GM12878 (cell line): ENCODE measurements at regions of chrX and their contacts with region 1.

Region 1: GRCh38 chrX:109714340-109714958 is 18.6 kb downstream of the ACSL4 start:
- DNase-seq: no peak
- ATAC-seq: peak; percentile 16; the same call in 2 of the 3 replicates
- H3K4me3 ChIP-seq: no peak overlapping the region
- H3K27ac ChIP-seq: no peak overlapping the region
- H3K4me1 ChIP-seq: peaks cover 3% of the 10 kb centered on the region
- H3K27me3 ChIP-seq: no peaks in the 10 kb centered on the region
- CTCF ChIP-seq: no peak
- EP300 ChIP-seq: no peak
- POLR2A ChIP-seq: no peak
- RAD21 ChIP-seq: no peak

Region 2: GRCh38 chrX:109184506-109185139 is 529.8 kb before region 1 on chrX:
- CTCF ChIA-PET with region 1: no interaction called
- POLR2A ChIA-PET with region 1: no interaction called
- RAD21 ChIA-PET with region 1: no interaction called
- SMC1A ChIA-PET with region 1: no interaction called
- in situ Hi-C with region 1: no loop called
- intact Hi-C with region 1: no loop called
- DNase-seq: no peak
- ATAC-seq: peak; percentile 47
- H3K4me3 ChIP-seq: no peak overlapping the region
- H3K27ac ChIP-seq: no peak overlapping the region; the same call in 1 of the 2 replicates
- H3K4me1 ChIP-seq: no peaks in the 10 kb centered on the region; the same call in 1 of the 2 replicates
- H3K27me3 ChIP-seq: no peaks in the 10 kb centered on the region
- CTCF ChIP-seq: no peak
- EP300 ChIP-seq: peak in 1 of 2 experiments; percentile 19; a peak in 1 of 4 replicates
- POLR2A ChIP-seq: no peak
- RAD21 ChIP-seq: no peak

Region 3: GRCh38 chrX:109485470-109486340 is 228.7 kb before region 1 on chrX:
- CTCF ChIA-PET with region 1: interaction called, 27 read pairs
- POLR2A ChIA-PET with region 1: no interaction called
- RAD21 ChIA-PET with region 1: interaction called, 8 read pairs
- SMC1A ChIA-PET with region 1: interaction called, 23 read pairs
- in situ Hi-C with region 1: no loop called
- intact Hi-C with region 1: loop called (anchors 5 kb)
- DNase-seq: peak; percentile 34
- ATAC-seq: peak; percentile 84
- H3K4me3 ChIP-seq: no peak overlapping the region
- H3K27ac ChIP-seq: no peak overlapping the region
- H3K4me1 ChIP-seq: no peaks in the 10 kb centered on the region
- H3K27me3 ChIP-seq: no peaks in the 10 kb centered on the region
- CTCF ChIP-seq: peak; percentile 93 to 99 (median 99); a peak in 5 of 6 replicates
- EP300 ChIP-seq: no peak
- POLR2A ChIP-seq: no peak
- RAD21 ChIP-seq: peak; percentile 91

Region 4: GRCh38 chrX:109774706-109775105 is 60.3 kb after region 1 on chrX:
- CTCF ChIA-PET with region 1: interaction called, 7 read pairs
- POLR2A ChIA-PET with region 1: interaction called, 7 read pairs
- RAD21 ChIA-PET with region 1: interaction called, 5 read pairs
- SMC1A ChIA-PET with region 1: interaction called, 24 read pairs
- in situ Hi-C with region 1: no loop called
- intact Hi-C with region 1: loop called (anchors 5 kb)
- DNase-seq: peak; percentile 50
- ATAC-seq: peak; percentile 97
- H3K4me3 ChIP-seq: no peak overlapping the region
- H3K27ac ChIP-seq: 0 out of 2 replicates have a peak overlapping the region, but pooled peaks have one; percentile 12
- H3K4me1 ChIP-seq: peaks cover 6% of the 10 kb centered on the region; the same call in 1 of the 2 replicates
- H3K27me3 ChIP-seq: no peaks in the 10 kb centered on the region
- CTCF ChIP-seq: no peak
- EP300 ChIP-seq: peak; percentile 64 to 85; a peak in 2 of 4 replicates
- POLR2A ChIP-seq: no peak
- RAD21 ChIP-seq: no peak

Region 5: GRCh38 chrX:109830704-109831206 is 116.3 kb after region 1 on chrX:
- CTCF ChIA-PET with region 1: interaction called, 3 read pairs
- POLR2A ChIA-PET with region 1: no interaction called
- RAD21 ChIA-PET with region 1: interaction called, 20 read pairs
- SMC1A ChIA-PET with region 1: interaction called, 12 read pairs
- in situ Hi-C with region 1: no loop called
- intact Hi-C with region 1: no loop called
- DNase-seq: no peak
- ATAC-seq: peak; percentile 80
- H3K4me3 ChIP-seq: no peak overlapping the region
- H3K27ac ChIP-seq: no peak overlapping the region
- H3K4me1 ChIP-seq: no peaks in the 10 kb centered on the region
- H3K27me3 ChIP-seq: no peaks in the 10 kb centered on the region
- CTCF ChIP-seq: no peak
- EP300 ChIP-seq: no peak
- POLR2A ChIP-seq: no peak
- RAD21 ChIP-seq: no peak

Region 6: DNA sequence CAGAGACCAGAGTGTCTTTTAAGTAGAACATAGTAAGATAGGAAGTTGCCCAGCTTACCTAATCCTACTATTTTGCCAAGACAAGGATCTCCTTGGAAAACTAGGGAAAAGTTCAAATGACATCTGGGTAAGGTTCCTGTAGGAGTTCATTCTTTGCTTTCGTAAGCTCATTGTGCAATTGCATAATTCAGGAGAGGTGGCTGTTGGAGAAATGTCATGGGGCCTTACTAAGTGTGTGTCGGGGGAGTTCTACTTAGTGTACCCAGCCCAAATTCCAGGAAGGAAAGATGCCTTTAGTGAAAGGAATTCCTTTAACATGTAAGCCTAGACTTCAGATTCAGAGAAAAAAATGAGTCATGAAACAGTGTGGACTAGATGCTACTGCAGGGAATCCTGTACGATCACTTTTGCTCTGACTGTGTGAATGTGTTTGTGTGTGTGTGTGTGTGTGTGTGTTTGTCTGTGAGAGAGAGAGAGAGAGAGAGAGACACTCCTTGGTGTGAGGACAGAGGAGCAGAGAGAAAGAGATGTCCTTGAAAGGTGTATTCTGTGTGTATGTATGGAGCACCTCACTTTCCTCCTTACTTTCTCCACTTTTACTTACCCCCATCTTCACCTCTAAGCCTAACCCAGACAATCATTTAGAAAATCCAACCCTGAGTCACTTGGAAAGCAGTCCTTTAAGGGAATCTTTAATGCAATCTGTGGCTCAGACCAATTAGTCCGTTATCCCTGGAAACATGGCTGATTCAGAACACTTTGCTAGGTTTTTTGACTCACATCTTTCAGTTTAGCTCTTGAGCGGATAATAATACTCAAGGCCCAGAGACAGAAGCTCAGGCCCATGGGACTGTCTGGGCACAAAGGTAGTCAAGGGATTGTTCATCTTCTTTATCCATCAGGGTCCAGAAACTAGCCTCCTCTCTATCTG is 133.1 kb after region 1 on chrX:
- CTCF ChIA-PET with region 1: interaction called, 337 read pairs
- POLR2A ChIA-PET with region 1: interaction called, 4 read pairs
- RAD21 ChIA-PET with region 1: interaction called, 20 read pairs
- SMC1A ChIA-PET with region 1: interaction called, 403 read pairs
- in situ Hi-C with region 1: no loop called
- intact Hi-C with region 1: no loop called
- DNase-seq: no peak
- ATAC-seq: no peak
- H3K4me3 ChIP-seq: no peak overlapping the region
- H3K27ac ChIP-seq: no peak overlapping the region
- H3K4me1 ChIP-seq: peaks cover 9% of the 10 kb centered on the region
- H3K27me3 ChIP-seq: no peaks in the 10 kb centered on the region
- CTCF ChIP-seq: no peak
- EP300 ChIP-seq: no peak
- POLR2A ChIP-seq: no peak
- RAD21 ChIP-seq: no peak

Region 7: GRCh38 chrX:109880629-109881028 is 166.2 kb after region 1 on chrX:
- CTCF ChIA-PET with region 1: interaction called, 98 read pairs
- POLR2A ChIA-PET with region 1: interaction called, 4 read pairs
- RAD21 ChIA-PET with region 1: interaction called, 20 read pairs
- SMC1A ChIA-PET with region 1: interaction called, 35 read pairs
- in situ Hi-C with region 1: loop called (anchors 5 kb)
- intact Hi-C with region 1: no loop called
- DNase-seq: peak; percentile 39
- ATAC-seq: peak; percentile 98
- H3K4me3 ChIP-seq: no peak overlapping the region
- H3K27ac ChIP-seq: no peak overlapping the region
- H3K4me1 ChIP-seq: no peaks in the 10 kb centered on the region
- H3K27me3 ChIP-seq: no peaks in the 10 kb centered on the region
- CTCF ChIP-seq: no peak
- EP300 ChIP-seq: peak in 1 of 2 experiments; percentile 28; a peak in 1 of 4 replicates
- POLR2A ChIP-seq: no peak
- RAD21 ChIP-seq: no peak